ENCODE measurements at regions of chr1 and their contacts with region 1.

Region 1: GRCh38 chr1:17059739-17060460 is 6.1 kb upstream of the SDHB start:
- DNase-seq: peak; percentile 51 to 83 (median 78)
- H3K4me3 ChIP-seq: peak overlapping the region in 33 of 59 donors; percentile 0 to 50 (median 16)
- H3K27ac ChIP-seq: peak overlapping the region in 56 of 59 donors; percentile 1 to 86 (median 68)
- H3K27me3 ChIP-seq: no peaks in the 10 kb centered on the region
- CTCF ChIP-seq: peak; percentile 39 to 96 (median 86)

Region 2: DNA sequence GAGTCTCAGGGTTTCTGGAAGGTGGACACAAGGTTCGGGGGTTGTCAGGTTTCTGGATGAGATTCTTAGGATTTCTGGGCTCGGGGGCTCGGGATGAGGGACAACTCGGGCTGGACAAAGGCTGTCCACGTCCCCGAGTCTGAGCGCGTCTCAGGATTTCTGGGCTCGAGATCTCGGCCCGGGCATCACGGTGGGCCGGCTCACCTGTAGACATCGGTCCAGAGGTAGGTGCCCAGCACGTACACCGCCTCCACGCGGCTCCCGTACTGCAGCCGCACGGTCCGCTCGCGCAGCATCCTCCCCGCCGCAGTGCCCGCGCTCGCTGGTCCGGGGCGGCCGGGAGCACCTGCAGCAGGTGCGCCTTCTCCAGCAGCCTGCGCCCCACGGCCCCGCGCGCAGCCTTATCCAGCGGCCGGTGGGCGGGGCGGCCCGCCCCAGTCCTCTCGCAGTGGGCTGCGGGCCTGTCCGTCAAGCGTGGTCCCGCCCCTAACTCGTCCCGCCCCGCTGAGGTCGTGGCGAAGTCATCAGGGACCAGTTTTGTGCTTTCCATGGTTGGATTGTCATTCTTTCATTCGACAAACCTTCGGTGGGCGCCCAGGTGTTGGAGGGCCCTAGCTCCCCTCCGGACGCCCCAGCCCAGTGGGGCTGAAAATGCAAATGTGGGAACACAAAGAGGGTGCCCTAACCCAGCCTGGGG is 59.3 kb after region 1 on chr1 and contains the start of gene PADI2:
- intact Hi-C with region 1: loop called (anchors 2 kb)
- DNase-seq: peak; percentile 81 to 93 (median 90)
- H3K4me3 ChIP-seq: peak within 1 kb of the TSS; percentile 59 to 96 (median 83)
- H3K27ac ChIP-seq: peak within 1 kb of the TSS in 58 of 59 donors; percentile 40 to 99 (median 83)
- H3K27me3 ChIP-seq: no peaks in the 10 kb centered on the region
- CTCF ChIP-seq: peak in 4 of 56 donors; percentile 12 to 33 (median 19)
- total RNA-seq, gene PADI2: 50.7 to 418 (median 112) TPM

Region 3: DNA sequence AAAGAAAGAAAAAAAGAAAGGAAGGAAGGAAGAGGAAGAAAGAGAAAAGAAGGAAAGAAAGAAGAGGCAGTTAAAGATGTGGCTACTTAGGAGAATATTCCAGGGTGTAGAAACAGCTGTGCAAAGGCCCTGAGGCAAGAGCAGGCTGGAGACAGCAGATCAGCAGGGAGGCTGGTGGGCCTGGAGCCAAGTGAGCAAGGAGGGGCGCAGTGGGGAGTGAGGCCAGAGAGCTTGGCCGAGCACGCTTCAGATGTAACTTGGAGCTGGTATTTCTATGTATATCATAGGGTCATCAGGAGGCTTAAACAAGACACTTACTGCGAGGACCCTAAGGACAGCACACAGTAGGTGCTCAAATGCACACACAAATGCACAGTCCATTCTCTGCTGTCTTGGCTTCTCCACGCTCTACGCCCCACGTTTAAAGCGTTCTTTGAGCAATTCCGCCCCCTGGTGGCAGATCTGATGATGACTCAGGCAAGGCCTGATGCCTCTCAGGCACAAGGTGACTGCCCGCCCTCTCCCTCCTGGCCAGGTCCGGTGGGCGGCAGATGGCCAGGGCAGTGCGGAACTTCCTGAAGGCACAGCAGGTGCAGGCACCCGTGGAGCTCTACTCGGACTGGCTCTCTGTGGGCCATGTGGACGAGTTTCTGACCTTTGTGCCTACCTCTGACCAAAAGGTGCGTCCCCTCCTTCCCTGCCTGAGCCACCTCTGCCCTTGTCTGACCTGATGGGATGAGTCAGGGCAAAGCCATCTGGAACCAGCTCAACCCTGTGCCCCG is 177.1 kb after region 1 on chr1:
- intact Hi-C with region 1: loop called (anchors 1 kb)
- DNase-seq: peak; percentile 79 to 93 (median 87)
- H3K4me3 ChIP-seq: no peak overlapping the region
- H3K27ac ChIP-seq: no peak overlapping the region
- H3K27me3 ChIP-seq: peaks cover 0 to 6% (median 0%) of the 10 kb centered on the region in 45 donors
- CTCF ChIP-seq: peak; percentile 82 to 98 (median 92)

Region 4: DNA sequence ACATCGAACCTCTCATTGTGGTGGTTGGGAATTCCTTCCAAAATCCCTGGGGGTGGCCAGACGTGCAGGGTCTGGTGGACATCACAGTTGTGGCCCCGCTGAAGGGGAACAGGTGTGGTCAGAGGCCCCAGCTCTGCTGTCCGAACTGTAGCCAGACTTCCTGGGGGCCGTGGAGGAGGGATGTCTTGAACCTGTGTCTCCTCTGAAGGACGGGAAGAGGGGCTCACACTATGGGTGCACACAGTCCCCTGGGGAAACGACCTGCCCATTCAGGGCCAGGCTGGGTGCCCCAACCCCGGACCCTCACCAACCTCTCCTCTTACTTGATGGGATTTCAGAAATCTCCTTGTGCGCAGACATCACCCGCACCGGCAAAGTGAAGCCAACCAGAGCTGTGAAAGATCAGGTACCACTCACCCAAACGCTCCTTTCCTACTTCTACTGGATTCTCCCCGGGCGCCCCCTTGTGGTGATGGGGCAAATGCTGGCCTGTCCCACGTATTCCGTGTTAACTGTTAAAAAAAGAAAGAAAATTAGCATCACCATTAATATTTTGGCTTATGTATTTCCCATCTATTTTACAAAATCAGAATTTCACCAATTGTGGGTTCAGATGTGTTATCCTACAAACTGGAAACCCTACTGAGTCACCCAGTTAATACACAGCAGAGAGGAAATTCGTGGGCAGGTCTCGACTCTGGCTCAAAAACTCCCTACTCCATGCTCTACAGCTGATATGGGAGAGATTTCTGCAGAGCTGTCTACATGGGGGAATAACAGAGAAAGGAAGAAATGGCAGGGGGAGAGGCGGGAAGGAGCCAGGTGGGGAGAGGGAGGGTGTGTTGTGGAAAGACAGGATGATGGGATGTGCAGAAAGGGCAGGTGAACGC is 276.2 kb after region 1 on chr1:
- intact Hi-C with region 1: loop called in 1 of 2 experiments (anchors 5 kb)
- DNase-seq: peak in 8 of 10 donors; percentile 39 to 58 (median 47)
- H3K4me3 ChIP-seq: no peak overlapping the region
- H3K27ac ChIP-seq: no peak overlapping the region
- H3K27me3 ChIP-seq: peaks cover 0 to 20% (median 0%) of the 10 kb centered on the region in 45 donors
- CTCF ChIP-seq: peak; percentile 44 to 85 (median 72)

Region 5: DNA sequence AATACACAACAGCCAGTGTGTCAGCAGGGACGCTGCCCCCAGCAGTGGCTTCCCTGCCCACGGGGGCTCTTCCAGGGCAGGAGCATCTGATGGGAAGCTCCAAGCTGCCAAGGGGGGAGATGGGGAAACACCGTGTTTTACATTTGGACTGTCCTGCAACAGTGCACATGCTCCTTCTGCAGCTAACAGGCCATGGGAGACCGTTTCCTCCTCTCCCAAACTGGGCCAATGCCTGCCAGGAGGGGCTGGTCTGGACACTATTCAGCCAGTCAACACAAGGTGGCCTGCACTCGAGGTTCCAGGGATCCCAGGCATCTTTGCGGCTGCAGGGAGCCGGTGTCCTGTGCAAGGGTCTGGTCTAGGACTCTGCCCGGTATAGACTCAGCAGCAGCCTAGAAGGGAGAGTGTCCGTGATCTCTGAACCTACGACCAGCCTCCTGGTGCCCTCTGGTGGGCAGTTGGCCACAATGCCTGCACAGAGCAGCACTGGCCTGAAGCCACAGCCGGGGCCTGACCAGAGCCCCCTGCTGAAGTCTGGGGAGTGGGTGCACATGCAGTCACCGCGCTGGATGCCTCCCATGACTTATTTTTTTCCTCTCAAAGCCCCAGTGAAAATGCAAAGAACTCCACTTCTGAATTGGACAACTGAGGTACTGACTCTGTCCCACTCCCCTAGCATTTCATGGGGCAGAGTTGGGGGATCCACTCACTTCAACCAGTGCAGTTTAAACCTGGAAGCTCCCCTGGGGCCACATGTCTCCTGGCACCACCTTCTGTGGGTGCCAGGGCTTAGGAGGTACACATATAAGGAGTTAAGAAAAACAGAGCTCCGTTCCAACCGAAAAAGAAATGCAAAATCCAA is 346.2 kb after region 1 on chr1:
- intact Hi-C with region 1: loop called (anchors 2 to 10 kb)
- DNase-seq: peak; percentile 50 to 75 (median 62)
- H3K4me3 ChIP-seq: no peak overlapping the region
- H3K27ac ChIP-seq: no peak overlapping the region
- H3K27me3 ChIP-seq: no peaks in the 10 kb centered on the region
- CTCF ChIP-seq: peak; percentile 28 to 84 (median 71)